ENCODE measurements at regions of chr1 and their contacts with region 1.

Region 1: DNA sequence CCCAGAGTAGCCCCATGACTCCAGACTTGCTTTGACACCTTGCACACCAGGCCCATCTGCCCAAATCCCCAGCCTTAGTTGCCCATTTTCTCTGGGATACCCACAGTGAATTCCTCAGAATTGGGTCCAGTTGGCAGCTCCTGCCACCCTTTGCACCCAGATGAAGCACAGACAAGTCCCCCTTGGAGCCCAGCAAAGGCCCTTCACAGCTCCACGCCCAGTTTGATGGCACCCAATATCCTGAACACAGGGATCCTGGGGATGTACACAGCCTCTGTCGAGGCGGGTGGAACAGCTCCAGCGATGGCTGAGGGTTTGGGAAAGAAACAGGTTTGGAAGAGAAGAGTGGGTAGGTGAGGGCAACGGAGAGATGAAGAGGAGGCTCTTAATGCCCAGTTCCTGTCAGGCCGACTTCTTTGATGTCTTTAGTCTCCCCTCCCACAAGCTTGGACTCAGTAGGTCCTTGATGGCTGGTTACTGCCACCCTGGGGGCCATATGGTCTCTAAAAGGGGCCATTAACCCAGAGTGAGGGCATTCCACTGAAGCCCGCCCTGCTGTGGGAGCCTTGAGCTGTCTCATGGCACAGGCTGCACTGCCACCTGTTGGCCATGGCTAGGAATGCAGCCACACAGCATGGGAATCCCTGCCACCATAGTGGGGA is 21.7 kb downstream of the TMEM53 start:
- DNase-seq: peak; percentile 74
- H3K4me3 Mint-ChIP-seq: no peak overlapping the region
- H3K27ac Mint-ChIP-seq: peak overlapping the region; percentile 43
- H3K4me1 Mint-ChIP-seq: no peaks in the 10 kb centered on the region
- H3K27me3 Mint-ChIP-seq: no peaks in the 10 kb centered on the region
- CTCF ChIP-seq: peak; percentile 97

Region 2: DNA sequence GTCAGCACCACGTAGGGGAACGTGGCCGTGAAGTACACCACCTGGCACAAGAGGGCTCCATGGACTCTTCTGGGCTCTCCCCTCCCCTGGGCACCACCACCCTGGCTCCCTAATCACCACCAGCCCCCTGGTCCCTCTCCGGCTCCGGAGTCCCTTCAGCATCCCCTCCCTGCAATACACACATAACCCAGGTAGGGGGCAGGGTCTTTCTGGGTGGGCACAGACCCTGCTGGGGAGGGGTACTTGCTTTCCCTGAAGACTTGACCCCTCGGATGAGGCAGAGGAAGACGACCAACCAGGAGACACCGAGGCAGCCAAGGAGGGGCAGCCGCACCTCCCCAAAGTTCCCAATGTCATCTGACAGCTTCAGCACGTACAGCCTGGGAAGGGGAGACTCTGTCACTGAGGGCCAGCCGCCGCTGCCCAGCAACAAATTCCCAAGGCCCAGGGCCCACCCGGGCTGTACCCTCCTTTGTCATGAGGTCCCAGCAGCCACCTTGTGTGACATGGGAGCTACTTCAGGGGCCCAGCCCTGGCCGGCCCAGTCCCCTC is 649.9 kb before region 1 on chr1:
- CTCF ChIA-PET with region 1: interaction called, 17 read pairs
- POLR2A ChIA-PET with region 1: no interaction called
- intact Hi-C with region 1: no loop called
- DNase-seq: no peak
- H3K4me3 Mint-ChIP-seq: no peak overlapping the region
- H3K27ac Mint-ChIP-seq: no peak overlapping the region
- H3K4me1 Mint-ChIP-seq: no peaks in the 10 kb centered on the region
- H3K27me3 Mint-ChIP-seq: no peaks in the 10 kb centered on the region
- CTCF ChIP-seq: peak; percentile 32

Region 3: DNA sequence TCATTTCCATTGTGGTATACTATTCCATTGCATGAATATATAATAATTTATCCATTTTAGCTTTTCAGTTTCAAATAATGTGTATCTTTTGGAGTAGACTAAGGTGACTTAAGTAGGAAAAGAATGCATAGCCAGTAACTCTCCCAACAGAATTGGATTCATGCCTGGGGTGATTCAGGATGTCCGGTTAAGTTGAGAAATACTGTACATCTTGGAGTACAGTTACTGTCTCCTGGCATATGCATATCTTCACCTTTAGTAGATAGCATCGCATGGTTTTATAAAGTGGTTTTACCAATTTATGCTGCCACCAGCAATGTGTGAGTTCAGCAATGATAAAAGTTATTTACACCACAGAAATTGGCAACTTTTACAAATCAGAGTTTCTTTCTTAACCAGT is 602.7 kb before region 1 on chr1:
- CTCF ChIA-PET with region 1: interaction called, 15 read pairs
- POLR2A ChIA-PET with region 1: no interaction called
- intact Hi-C with region 1: no loop called
- DNase-seq: peak; percentile 92
- H3K4me3 Mint-ChIP-seq: no peak overlapping the region
- H3K27ac Mint-ChIP-seq: no peak overlapping the region
- H3K4me1 Mint-ChIP-seq: peaks cover 33% of the 10 kb centered on the region
- H3K27me3 Mint-ChIP-seq: no peaks in the 10 kb centered on the region
- CTCF ChIP-seq: no peak

Region 4: DNA sequence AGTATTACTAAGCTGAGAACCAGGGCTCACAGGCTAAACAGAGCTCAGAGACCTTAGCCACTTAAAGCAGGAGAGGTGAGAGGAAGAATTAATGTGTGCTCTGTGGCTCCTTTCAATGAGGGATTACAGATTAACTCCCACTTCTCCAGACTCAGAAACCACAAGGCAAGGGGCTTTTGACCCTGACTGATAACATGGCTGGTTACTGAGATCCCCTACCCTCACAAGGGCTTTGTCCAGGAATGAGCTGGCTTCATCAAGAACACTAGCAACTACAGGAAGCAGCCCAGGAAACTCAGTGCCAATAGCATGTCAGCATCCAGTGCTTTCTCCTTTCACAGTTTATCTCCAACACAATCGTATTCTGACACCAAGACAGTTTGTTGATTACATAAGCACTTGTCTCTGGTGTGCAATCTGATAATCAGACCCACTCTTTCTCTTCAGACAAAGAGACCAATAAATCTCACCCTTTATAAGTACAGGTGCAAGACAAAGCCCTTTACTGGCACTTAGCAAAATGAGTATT is 336.3 kb before region 1 on chr1:
- CTCF ChIA-PET with region 1: interaction called, 13 read pairs
- POLR2A ChIA-PET with region 1: no interaction called
- intact Hi-C with region 1: no loop called
- DNase-seq: no peak
- H3K4me3 Mint-ChIP-seq: no peak overlapping the region
- H3K27ac Mint-ChIP-seq: no peak overlapping the region
- H3K4me1 Mint-ChIP-seq: no peaks in the 10 kb centered on the region
- H3K27me3 Mint-ChIP-seq: no peaks in the 10 kb centered on the region
- CTCF ChIP-seq: no peak

Region 5: GRCh38 chr1:44609412-44609767 is 43.2 kb before region 1 on chr1:
- CTCF ChIA-PET with region 1: interaction called, 5 read pairs
- POLR2A ChIA-PET with region 1: no interaction called
- intact Hi-C with region 1: loop called (anchors 1 kb)
- DNase-seq: peak; percentile 43
- H3K4me3 Mint-ChIP-seq: no peak overlapping the region
- H3K27ac Mint-ChIP-seq: no peak overlapping the region
- H3K4me1 Mint-ChIP-seq: peaks cover 7% of the 10 kb centered on the region
- H3K27me3 Mint-ChIP-seq: no peaks in the 10 kb centered on the region
- CTCF ChIP-seq: peak; percentile 31

Region 6: DNA sequence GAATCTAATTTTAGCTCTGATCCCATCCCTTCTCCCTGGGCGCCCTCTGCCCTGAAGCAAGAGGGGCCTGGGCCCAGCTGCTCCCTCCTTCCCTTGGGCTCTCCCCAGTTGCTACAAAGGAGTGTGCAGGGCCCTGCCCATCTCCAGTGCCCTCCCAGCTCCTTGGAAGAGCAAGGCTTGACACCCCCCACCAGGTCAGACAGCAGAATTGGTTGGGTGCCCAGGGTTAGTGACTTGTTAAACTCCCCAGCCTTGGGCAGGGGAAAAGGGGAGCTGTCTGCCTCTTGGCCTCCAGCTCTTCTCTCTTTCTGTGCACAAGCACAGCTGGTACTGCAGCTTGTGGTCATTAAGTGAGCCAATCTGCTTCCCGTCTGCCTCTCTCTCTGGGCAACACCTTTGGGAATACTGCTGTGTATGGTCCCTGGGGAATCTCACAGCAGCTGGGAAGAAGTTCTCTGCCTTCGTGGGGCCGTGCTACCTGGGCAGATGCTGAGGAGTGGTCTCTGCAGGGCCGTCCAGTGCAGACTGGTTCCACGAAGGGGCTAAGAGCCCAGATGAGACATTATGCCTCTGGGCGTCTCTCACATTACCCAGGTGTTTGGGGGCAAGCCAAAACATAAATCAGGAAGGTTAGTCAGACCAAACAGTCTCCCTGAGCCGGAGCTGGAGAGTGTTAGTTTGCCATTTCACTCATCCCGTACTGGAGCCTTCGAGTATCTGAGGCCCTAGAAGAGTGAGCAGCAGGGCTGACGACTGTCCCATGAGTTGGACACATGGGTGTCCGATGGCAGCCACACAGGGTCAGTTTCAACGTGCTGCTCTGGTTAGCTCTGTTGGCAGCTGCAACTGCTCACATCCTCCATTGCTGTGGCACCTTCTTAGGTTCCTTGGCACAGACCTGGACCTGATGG is 15.6 kb before region 1 on chr1:
- CTCF ChIA-PET with region 1: interaction called, 63 read pairs
- POLR2A ChIA-PET with region 1: interaction called, 11 read pairs
- intact Hi-C with region 1: no loop called
- DNase-seq: peak; percentile 15
- H3K4me3 Mint-ChIP-seq: no peak overlapping the region
- H3K27ac Mint-ChIP-seq: no peak overlapping the region
- H3K4me1 Mint-ChIP-seq: peaks cover 8% of the 10 kb centered on the region
- H3K27me3 Mint-ChIP-seq: no peaks in the 10 kb centered on the region
- CTCF ChIP-seq: no peak

Region 7: GRCh38 chr1:44674113-44675000 is 21.8 kb after region 1 on chr1 and contains the starts of genes ARMH1 and TMEM53:
- CTCF ChIA-PET with region 1: interaction called, 29 read pairs
- POLR2A ChIA-PET with region 1: interaction called, 4 read pairs
- intact Hi-C with region 1: loop called (anchors 1 kb)
- DNase-seq: peak; percentile 99
- H3K4me3 Mint-ChIP-seq: peak within 1 kb of the TSS; percentile 74
- H3K27ac Mint-ChIP-seq: peak within 1 kb of the TSS; percentile 96
- H3K4me1 Mint-ChIP-seq: peaks cover 17% of the 10 kb centered on the region
- H3K27me3 Mint-ChIP-seq: no peaks in the 10 kb centered on the region
- CTCF ChIP-seq: no peak
- total RNA-seq, gene ARMH1: 0.65 and 0.96 TPM in 2 replicates
- total RNA-seq, gene TMEM53: 2.2 TPM in 2 replicates

Region 8: DNA sequence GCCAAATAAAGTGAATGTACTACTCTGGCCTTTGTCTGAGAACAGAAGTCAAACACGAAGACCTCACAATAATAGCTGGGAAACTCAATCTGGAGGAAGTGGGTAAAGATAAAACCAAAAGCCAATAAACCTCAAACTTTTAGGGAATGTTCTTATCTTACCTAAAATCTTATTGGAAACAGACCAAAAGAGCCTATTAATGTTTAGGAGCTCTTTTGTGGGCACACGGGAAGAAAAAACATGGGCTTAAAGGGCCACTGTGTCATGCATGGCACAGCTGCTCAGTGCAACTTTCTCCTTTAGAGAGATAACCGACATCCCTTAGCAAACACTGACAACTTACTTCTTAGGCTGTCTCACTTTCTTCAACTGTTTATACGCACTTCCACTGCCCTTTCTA is 317.7 kb after region 1 on chr1:
- CTCF ChIA-PET with region 1: no interaction called
- POLR2A ChIA-PET with region 1: no interaction called
- intact Hi-C with region 1: no loop called
- DNase-seq: no peak
- H3K4me3 Mint-ChIP-seq: no peak overlapping the region
- H3K27ac Mint-ChIP-seq: no peak overlapping the region
- H3K4me1 Mint-ChIP-seq: no peaks in the 10 kb centered on the region
- H3K27me3 Mint-ChIP-seq: no peaks in the 10 kb centered on the region
- CTCF ChIP-seq: no peak

Measured in MCF 10A (cell line).